Activated naive CD4-positive, alpha-beta T cell treated with anti-CD3 and anti-CD28 coated beads for 36 hours (primary cell): ENCODE measurements at regions of chr16 and their contacts with region 1.

Region 1: DNA sequence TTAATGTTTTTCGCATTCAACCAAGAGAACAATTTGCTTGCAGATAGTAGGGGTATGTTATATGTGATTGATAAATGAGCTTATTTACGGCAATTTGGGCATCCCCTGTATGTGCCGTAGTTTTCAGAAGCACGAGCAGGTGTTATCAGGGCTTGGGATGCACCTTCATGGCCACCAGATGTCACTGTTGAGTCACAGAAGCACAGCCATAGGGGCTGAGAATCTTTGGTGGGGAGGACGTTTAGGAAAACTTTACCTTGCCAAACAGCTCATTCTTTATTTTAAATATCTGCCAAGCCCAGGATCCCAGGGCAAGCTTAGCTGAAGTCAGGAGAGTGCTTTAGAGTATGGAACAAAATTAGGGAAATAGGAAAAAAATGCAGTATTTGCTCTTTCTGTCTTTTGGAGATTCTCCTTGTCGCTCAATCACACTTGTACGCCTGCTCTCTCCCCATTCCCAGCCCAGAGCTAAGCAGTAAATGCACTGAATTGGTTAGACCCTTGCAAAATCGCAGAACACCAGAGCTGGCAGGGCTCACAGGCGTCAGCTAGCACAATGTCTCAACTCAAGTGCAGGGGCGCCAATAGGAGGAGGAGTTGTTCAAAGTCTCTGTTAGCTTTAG is 93.6 kb upstream of the MPHOSPH6 start:
- DNase-seq: peak; percentile 70
- H3K4me3 Mint-ChIP-seq: no peak overlapping the region
- H3K27ac Mint-ChIP-seq: no peak overlapping the region
- H3K4me1 Mint-ChIP-seq: no peaks in the 10 kb centered on the region
- H3K27me3 Mint-ChIP-seq: peaks cover 24% of the 10 kb centered on the region

Region 2: DNA sequence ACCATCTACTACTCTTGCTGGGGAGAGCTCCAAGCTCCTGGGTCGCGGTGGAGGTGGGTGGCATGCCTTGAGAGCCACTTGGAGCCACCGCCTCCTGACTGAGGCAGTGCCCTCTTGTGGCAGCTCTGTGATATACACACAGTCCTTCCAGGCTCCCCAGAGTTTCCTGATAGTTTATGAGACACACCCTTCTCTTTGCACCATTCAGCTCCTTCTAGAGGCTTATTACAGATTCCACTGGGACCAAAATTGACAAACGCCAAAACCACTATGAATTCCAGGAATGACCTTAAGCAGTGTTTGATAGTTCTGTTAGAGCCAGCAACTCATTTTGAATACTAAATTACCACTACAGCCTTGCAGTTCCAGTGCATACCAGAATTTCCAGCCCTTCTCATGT is 193.1 kb after region 1 on chr16:
- CTCF ChIA-PET with region 1: interaction called, 29 read pairs
- intact Hi-C with region 1: loop called (anchors 2 kb)
- DNase-seq: peak; percentile 52
- H3K4me3 Mint-ChIP-seq: no peak overlapping the region
- H3K27ac Mint-ChIP-seq: no peak overlapping the region
- H3K4me1 Mint-ChIP-seq: no peaks in the 10 kb centered on the region
- H3K27me3 Mint-ChIP-seq: peaks cover 13% of the 10 kb centered on the region

Region 3: GRCh38 chr16:82639666-82640336 is 376.2 kb after region 1 on chr16:
- CTCF ChIA-PET with region 1: interaction called, 5 read pairs
- intact Hi-C with region 1: loop called (anchors 1 kb)
- DNase-seq: peak; percentile 66
- H3K4me3 Mint-ChIP-seq: no peak overlapping the region
- H3K27ac Mint-ChIP-seq: no peak overlapping the region
- H3K4me1 Mint-ChIP-seq: peaks cover 8% of the 10 kb centered on the region
- H3K27me3 Mint-ChIP-seq: peaks cover 6% of the 10 kb centered on the region

Region 4: GRCh38 chr16:82738699-82739098 is 475.1 kb after region 1 on chr16:
- CTCF ChIA-PET with region 1: no interaction called
- intact Hi-C with region 1: no loop called
- DNase-seq: no peak
- H3K4me3 Mint-ChIP-seq: no peak overlapping the region
- H3K27ac Mint-ChIP-seq: no peak overlapping the region
- H3K4me1 Mint-ChIP-seq: no peaks in the 10 kb centered on the region
- H3K27me3 Mint-ChIP-seq: peaks cover 9% of the 10 kb centered on the region

Region 5: GRCh38 chr16:83215406-83216001 is 951.9 kb after region 1 on chr16:
- CTCF ChIA-PET with region 1: no interaction called
- intact Hi-C with region 1: loop called (anchors 2 kb)
- DNase-seq: peak; percentile 62
- H3K4me3 Mint-ChIP-seq: no peak overlapping the region
- H3K27ac Mint-ChIP-seq: no peak overlapping the region
- H3K4me1 Mint-ChIP-seq: no peaks in the 10 kb centered on the region
- H3K27me3 Mint-ChIP-seq: no peaks in the 10 kb centered on the region

Region 6: GRCh38 chr16:83449861-83450260 is 1186.2 kb after region 1 on chr16:
- CTCF ChIA-PET with region 1: interaction called, 7 read pairs
- intact Hi-C with region 1: loop called (anchors 5 kb)
- DNase-seq: no peak
- H3K4me3 Mint-ChIP-seq: no peak overlapping the region
- H3K27ac Mint-ChIP-seq: no peak overlapping the region
- H3K4me1 Mint-ChIP-seq: no peaks in the 10 kb centered on the region
- H3K27me3 Mint-ChIP-seq: no peaks in the 10 kb centered on the region